A549 (cell line): ENCODE measurements at regions of chr2 and their contacts with region 1.

Region 1: GRCh38 chr2:3692381-3692780 is 11.0 kb upstream of the DCDC2C start:
- DNase-seq: peak; percentile 40 to 49
- ATAC-seq: peak; percentile 78 to 86; a peak in 5 of 6 replicates
- H3K4me3 ChIP-seq: no peak overlapping the region
- H3K27ac ChIP-seq: no peak overlapping the region
- H3K4me1 ChIP-seq: no peaks in the 10 kb centered on the region
- CTCF ChIP-seq: peak; percentile 61
- EP300 ChIP-seq: no peak
- POLR2A ChIP-seq: no peak
- RAD21 ChIP-seq: peak; percentile 66 to 84

Region 2: DNA sequence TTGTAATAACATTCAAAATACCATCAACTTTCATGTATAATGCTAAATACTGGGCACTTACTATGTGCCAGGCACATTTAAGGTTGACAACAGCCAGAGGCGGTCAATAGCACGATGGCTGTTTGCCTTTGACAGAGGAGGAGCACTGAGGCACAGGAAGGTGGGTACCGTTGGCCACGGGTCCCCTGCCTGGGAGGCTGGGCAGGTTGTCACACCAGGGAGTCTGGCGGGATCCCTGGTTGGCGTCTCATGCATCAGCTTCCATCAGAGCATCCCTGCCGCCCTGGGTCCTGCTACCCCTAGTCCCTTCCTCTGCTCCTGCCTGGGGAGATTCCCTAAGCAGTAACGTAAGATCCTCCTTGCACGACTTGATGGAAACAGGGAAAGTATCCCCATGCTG is 14.9 kb before region 1 on chr2:
- CTCF ChIA-PET with region 1: interaction called, 12 read pairs
- POLR2A ChIA-PET with region 1: no interaction called
- DNase-seq: no peak
- ATAC-seq: no peak
- H3K4me3 ChIP-seq: no peak overlapping the region
- H3K27ac ChIP-seq: no peak overlapping the region
- H3K4me1 ChIP-seq: no peaks in the 10 kb centered on the region
- CTCF ChIP-seq: no peak
- EP300 ChIP-seq: no peak
- POLR2A ChIP-seq: no peak
- RAD21 ChIP-seq: no peak

Region 3: GRCh38 chr2:3712831-3713503 is 20.6 kb after region 1 on chr2:
- CTCF ChIA-PET with region 1: interaction called, 10 read pairs
- POLR2A ChIA-PET with region 1: no interaction called
- DNase-seq: no peak
- ATAC-seq: no peak
- H3K4me3 ChIP-seq: no peak overlapping the region
- H3K27ac ChIP-seq: no peak overlapping the region
- H3K4me1 ChIP-seq: no peaks in the 10 kb centered on the region
- CTCF ChIP-seq: no peak
- EP300 ChIP-seq: no peak
- POLR2A ChIP-seq: no peak
- RAD21 ChIP-seq: no peak

Region 4: GRCh38 chr2:3827673-3828575 is 135.5 kb after region 1 on chr2:
- CTCF ChIA-PET with region 1: interaction called, 10 read pairs
- POLR2A ChIA-PET with region 1: no interaction called
- DNase-seq: peak; percentile 35 to 60
- ATAC-seq: peak; percentile 61 to 91; a peak in 4 of 6 replicates
- H3K4me3 ChIP-seq: no peak overlapping the region
- H3K27ac ChIP-seq: no peak overlapping the region
- H3K4me1 ChIP-seq: no peaks in the 10 kb centered on the region
- CTCF ChIP-seq: peak; percentile 73
- EP300 ChIP-seq: no peak
- POLR2A ChIP-seq: no peak
- RAD21 ChIP-seq: peak; percentile 52 to 58